ENCODE measurements at regions of chr1 and their contacts with region 1.

Region 1: GRCh38 chr1:109490029-109490933 is 3.6 kb upstream of the CYB561D1 start:
- DNase-seq: peak in 1 of 2 donors; percentile 70
- H3K4me3 ChIP-seq: no peak overlapping the region
- H3K27ac ChIP-seq: no peak overlapping the region
- H3K4me1 ChIP-seq: peaks cover 0 to 18% (median 12%) of the 10 kb centered on the region in 4 donors
- H3K27me3 ChIP-seq: no peaks in the 10 kb centered on the region
- CTCF ChIP-seq: peak; percentile 69 to 88

Region 2: DNA sequence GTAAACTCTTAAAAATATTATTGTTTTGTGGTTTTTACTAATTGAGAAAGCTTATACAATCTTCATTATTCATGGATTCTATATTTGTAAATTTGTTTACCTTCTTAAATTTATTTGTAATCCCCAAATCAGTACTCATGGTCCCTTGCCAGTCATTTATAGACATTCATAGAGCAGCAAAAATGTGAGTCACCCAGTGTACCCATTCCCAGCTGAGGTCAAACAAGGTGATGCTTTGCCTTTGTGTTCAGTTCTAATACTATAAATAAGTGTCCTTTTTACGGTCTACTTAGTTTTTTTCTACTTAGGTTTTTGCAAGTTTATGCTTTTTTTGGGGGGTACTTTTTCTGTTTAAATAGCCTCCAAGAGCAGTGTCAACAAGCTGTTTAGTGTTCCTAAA is 128.6 kb before region 1 on chr1:
- intact Hi-C with region 1: no loop called
- DNase-seq: no peak
- H3K4me3 ChIP-seq: no peak overlapping the region
- H3K27ac ChIP-seq: peak overlapping the region; percentile 51 to 62
- H3K4me1 ChIP-seq: peaks cover 0 to 90% (median 19%) of the 10 kb centered on the region in 4 donors
- H3K27me3 ChIP-seq: no peaks in the 10 kb centered on the region
- CTCF ChIP-seq: no peak

Region 3: GRCh38 chr1:109500941-109501381 is 10.7 kb after region 1 on chr1:
- intact Hi-C with region 1: loop called (anchors 1 kb)
- DNase-seq: no peak
- H3K4me3 ChIP-seq: no peak overlapping the region
- H3K27ac ChIP-seq: peak overlapping the region; percentile 57 to 59
- H3K4me1 ChIP-seq: peaks cover 0 to 58% (median 32%) of the 10 kb centered on the region in 4 donors
- H3K27me3 ChIP-seq: no peaks in the 10 kb centered on the region
- CTCF ChIP-seq: no peak

Region 4: DNA sequence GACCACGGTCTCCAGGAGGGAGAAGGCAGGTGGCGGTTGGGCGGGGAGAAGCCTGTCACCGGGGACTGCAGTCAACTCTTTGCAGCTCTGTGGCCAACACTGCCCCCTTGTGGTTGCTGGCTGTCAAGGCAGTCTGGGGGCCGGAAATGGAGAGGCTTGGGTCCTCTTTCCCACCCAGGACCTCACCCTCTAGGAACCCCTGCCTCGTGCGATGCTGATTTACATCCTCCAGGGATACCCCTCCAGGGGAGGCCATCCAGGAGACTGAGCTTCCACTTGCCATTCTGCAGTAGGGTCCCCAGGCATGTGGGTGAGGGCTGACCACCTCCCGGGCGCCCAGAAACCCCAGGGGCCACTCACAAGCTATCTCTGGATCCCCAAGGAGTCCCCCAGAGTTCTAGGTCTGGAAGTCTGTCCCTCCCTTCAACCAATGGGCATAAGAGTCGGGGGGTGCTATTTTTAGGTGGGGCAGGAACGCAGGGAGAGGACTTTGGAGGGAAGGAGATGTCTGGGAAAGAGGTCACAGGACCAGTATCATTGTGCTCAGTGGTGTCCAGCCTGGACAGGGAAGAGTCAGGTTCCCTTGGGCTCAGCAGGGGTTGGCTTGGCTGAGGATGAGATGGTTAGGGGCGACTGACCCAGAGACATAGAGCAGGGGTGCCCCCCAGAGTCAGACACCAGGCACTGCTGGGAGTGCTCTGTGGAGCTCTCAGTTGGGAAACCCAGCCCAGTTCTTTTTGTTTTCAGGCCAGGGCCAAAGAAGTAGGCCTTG is 42.3 kb after region 1 on chr1:
- intact Hi-C with region 1: loop called (anchors 2 kb)
- DNase-seq: peak; percentile 78 to 88
- H3K4me3 ChIP-seq: peak overlapping the region; percentile 34 to 36
- H3K27ac ChIP-seq: peak overlapping the region; percentile 41 to 63
- H3K4me1 ChIP-seq: peaks cover 0 to 31% (median 14%) of the 10 kb centered on the region in 4 donors
- H3K27me3 ChIP-seq: no peaks in the 10 kb centered on the region
- CTCF ChIP-seq: peak; percentile 97 to 99